ENCODE measurements at regions of chr20 and their contacts with region 1.

Region 1: GRCh38 chr20:5001174-5002076 is at the start of gene SLC23A2:
- DNase-seq: peak; percentile 24 to 85 (median 53)
- ATAC-seq: peak; percentile 88
- H3K4me3 ChIP-seq: peak within 1 kb of the TSS; percentile 76
- H3K4me3 Mint-ChIP-seq: peak within 1 kb of the TSS; percentile 100
- H3K27ac ChIP-seq: peak within 1 kb of the TSS in 1 of 2 donors; percentile 13
- H3K27ac Mint-ChIP-seq: peak within 1 kb of the TSS; percentile 90
- H3K4me1 ChIP-seq: peaks cover 34% of the 10 kb centered on the region
- H3K4me1 Mint-ChIP-seq: peaks cover 43% of the 10 kb centered on the region
- H3K27me3 ChIP-seq: no peaks in the 10 kb centered on the region
- H3K27me3 Mint-ChIP-seq: no peaks in the 10 kb centered on the region
- CTCF ChIP-seq: no peak
- total RNA-seq, gene SLC23A2: 22.8 to 23.0 TPM

Region 2: GRCh38 chr20:4961746-4962145 is 39.7 kb before region 1 on chr20:
- CTCF ChIA-PET with region 1: no interaction called
- POLR2A ChIA-PET with region 1: interaction called, 5 read pairs
- intact Hi-C with region 1: loop called in 1 of 2 experiments (anchors 5 kb)
- DNase-seq: peak in 7 of 14 experiments; percentile 4 to 64 (median 23)
- ATAC-seq: peak; percentile 85
- H3K4me3 ChIP-seq: no peak overlapping the region
- H3K4me3 Mint-ChIP-seq: peak overlapping the region; percentile 36
- H3K27ac ChIP-seq: peak overlapping the region; percentile 48 to 67
- H3K27ac Mint-ChIP-seq: peak overlapping the region; percentile 79
- H3K4me1 ChIP-seq: peaks cover 16% of the 10 kb centered on the region
- H3K4me1 Mint-ChIP-seq: peaks cover 14% of the 10 kb centered on the region
- H3K27me3 ChIP-seq: no peaks in the 10 kb centered on the region
- H3K27me3 Mint-ChIP-seq: no peaks in the 10 kb centered on the region
- CTCF ChIP-seq: no peak

Region 3: DNA sequence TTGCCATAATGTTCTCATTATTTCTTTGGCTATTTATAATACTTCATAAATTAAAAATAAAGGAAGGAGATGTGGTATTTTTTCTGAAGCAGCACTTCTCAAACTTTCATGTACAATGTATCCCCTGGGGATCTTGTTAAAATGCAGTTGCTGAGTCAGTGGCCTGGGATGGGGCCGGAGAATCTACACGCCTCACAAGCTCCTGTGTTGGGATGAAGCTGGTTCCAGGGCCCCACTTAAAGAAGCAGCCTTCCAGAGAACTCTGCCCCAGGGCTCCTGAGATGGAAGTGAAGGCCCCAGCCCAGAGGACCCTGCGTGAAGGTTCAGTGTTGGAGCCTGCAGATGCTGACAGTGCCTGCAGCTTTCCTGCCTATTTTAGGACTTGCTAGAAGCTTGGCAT is 40.0 kb after region 1 on chr20:
- CTCF ChIA-PET with region 1: no interaction called
- POLR2A ChIA-PET with region 1: no interaction called
- intact Hi-C with region 1: no loop called
- DNase-seq: no peak
- ATAC-seq: no peak
- H3K4me3 ChIP-seq: no peak overlapping the region
- H3K4me3 Mint-ChIP-seq: no peak overlapping the region
- H3K27ac ChIP-seq: no peak overlapping the region
- H3K27ac Mint-ChIP-seq: no peak overlapping the region
- H3K4me1 ChIP-seq: no peaks in the 10 kb centered on the region
- H3K4me1 Mint-ChIP-seq: no peaks in the 10 kb centered on the region
- H3K27me3 ChIP-seq: no peaks in the 10 kb centered on the region
- H3K27me3 Mint-ChIP-seq: peaks cover 4% of the 10 kb centered on the region
- CTCF ChIP-seq: no peak

Region 4: GRCh38 chr20:5078399-5078958 is 77.1 kb after region 1 on chr20:
- CTCF ChIA-PET with region 1: no interaction called
- POLR2A ChIA-PET with region 1: interaction called, 4 read pairs
- intact Hi-C with region 1: loop called in 1 of 2 experiments (anchors 10 kb)
- DNase-seq: peak; percentile 54 to 92 (median 69)
- ATAC-seq: peak; percentile 95
- H3K4me3 ChIP-seq: peak overlapping the region; percentile 55
- H3K4me3 Mint-ChIP-seq: peak overlapping the region; percentile 90
- H3K27ac ChIP-seq: peak overlapping the region; percentile 81 to 96
- H3K27ac Mint-ChIP-seq: peak overlapping the region; percentile 99
- H3K4me1 ChIP-seq: peaks cover 23% of the 10 kb centered on the region
- H3K4me1 Mint-ChIP-seq: peaks cover 29% of the 10 kb centered on the region
- H3K27me3 ChIP-seq: no peaks in the 10 kb centered on the region
- H3K27me3 Mint-ChIP-seq: no peaks in the 10 kb centered on the region
- CTCF ChIP-seq: no peak